Gastrocnemius medialis (tissue), 4 donors: ENCODE measurements at regions of chr6 and their contacts with region 1.

Region 1: DNA sequence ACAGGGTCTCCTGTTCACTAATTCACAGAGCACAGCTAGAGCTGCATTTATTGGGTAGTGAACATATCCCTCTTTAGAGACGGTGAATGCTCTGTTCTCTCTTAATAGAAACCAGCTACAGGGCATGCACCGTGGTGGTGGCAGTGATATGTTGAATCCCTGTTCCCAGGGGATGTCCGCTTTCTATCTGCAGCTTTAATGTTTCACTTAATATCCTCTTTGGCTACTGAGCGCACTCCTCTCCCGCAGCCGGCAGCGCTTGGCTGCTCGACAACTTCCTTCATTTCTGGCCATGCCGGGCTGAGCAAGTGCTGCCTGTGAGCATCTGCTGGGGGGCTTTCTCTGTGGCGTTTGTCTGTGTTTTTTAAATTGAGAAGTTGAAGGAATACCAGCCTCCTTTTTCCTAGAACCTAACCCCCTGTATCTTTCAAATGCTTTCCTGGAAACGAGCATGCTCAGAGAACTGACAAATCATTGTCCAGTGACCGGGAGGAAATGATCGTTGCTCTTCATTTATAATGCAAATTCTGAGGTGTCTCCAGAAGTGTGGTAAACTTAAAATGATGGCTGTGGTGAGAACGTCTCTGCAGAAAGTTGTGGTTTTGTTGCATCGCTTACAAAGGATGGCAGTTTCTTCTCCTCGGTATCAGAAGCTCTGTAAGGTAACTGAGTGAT is 297.9 kb downstream of the UTRN start:
- DNase-seq: peak in 1 of 2 donors; percentile 17
- ATAC-seq: no peak
- H3K4me3 ChIP-seq: peak overlapping the region in 2 of 4 donors; percentile 15 to 24
- H3K27ac ChIP-seq: no peak overlapping the region
- H3K4me1 ChIP-seq: peaks cover 19 to 32% of the 10 kb centered on the region in 2 donors
- H3K27me3 ChIP-seq: no peaks in the 10 kb centered on the region
- CTCF ChIP-seq: no peak
- POLR2A ChIP-seq: no peak

Region 2: GRCh38 chr6:144931172-144932035 is 348.3 kb after region 1 on chr6:
- in situ Hi-C with region 1: loop called in 1 of 4 experiments (anchors 10 kb)
- intact Hi-C with region 1: loop called (anchors 5 kb)
- DNase-seq: no peak
- ATAC-seq: no peak
- H3K4me3 ChIP-seq: no peak overlapping the region
- H3K27ac ChIP-seq: no peak overlapping the region
- H3K4me1 ChIP-seq: peaks cover 0 to 7% of the 10 kb centered on the region in 2 donors
- H3K27me3 ChIP-seq: no peaks in the 10 kb centered on the region
- CTCF ChIP-seq: peak in 2 of 5 experiments; percentile 42 to 47
- POLR2A ChIP-seq: no peak

Region 3: DNA sequence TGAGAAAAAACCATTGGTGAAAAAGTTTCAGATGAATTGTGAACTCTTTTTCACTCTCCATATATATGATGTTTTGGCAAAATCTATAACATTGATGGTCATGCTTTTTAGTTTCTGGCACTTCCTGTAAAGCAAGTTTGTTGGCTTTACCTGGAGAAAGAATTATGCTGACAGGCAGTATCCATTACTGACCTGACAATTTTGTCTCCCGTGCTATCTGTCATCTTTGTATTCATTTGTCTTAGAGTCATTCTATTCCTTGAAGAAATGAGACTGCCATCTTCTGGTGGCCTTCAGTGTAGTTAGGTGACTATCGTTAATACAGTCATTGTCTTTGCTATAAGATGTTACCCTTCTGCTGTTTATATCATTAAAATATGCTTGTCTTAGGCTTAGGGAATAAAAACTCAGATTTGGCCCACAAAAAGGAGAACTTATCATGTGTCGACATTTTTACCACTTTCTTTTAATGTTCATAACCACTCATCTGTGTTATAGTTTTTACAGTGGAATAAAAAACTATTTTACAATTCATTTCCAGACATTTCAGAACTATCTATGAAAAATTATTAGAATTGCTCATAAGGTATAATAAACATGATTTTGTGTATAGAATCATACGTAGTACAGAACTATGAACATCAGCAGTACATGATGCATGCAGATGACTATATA is 445.2 kb after region 1 on chr6:
- in situ Hi-C with region 1: loop called in 1 of 4 experiments (anchors 25 kb)
- intact Hi-C with region 1: loop called (anchors 10 kb)
- DNase-seq: no peak
- ATAC-seq: peak in 1 of 2 donors; percentile 33
- H3K4me3 ChIP-seq: no peak overlapping the region
- H3K27ac ChIP-seq: no peak overlapping the region
- H3K4me1 ChIP-seq: peaks cover 3 to 5% of the 10 kb centered on the region in 2 donors
- H3K27me3 ChIP-seq: no peaks in the 10 kb centered on the region
- CTCF ChIP-seq: peak in 4 of 5 experiments; percentile 22 to 44 (median 31)
- POLR2A ChIP-seq: no peak

Region 4: GRCh38 chr6:145214570-145214969 is 631.5 kb after region 1 on chr6:
- in situ Hi-C with region 1: loop called (anchors 10 to 25 kb)
- intact Hi-C with region 1: loop called (anchors 5 kb)
- DNase-seq: no peak
- ATAC-seq: no peak
- H3K4me3 ChIP-seq: no peak overlapping the region
- H3K27ac ChIP-seq: no peak overlapping the region
- H3K4me1 ChIP-seq: no peaks in the 10 kb centered on the region
- H3K27me3 ChIP-seq: no peaks in the 10 kb centered on the region
- CTCF ChIP-seq: peak; percentile 14 to 57 (median 24)
- POLR2A ChIP-seq: no peak

Region 5: DNA sequence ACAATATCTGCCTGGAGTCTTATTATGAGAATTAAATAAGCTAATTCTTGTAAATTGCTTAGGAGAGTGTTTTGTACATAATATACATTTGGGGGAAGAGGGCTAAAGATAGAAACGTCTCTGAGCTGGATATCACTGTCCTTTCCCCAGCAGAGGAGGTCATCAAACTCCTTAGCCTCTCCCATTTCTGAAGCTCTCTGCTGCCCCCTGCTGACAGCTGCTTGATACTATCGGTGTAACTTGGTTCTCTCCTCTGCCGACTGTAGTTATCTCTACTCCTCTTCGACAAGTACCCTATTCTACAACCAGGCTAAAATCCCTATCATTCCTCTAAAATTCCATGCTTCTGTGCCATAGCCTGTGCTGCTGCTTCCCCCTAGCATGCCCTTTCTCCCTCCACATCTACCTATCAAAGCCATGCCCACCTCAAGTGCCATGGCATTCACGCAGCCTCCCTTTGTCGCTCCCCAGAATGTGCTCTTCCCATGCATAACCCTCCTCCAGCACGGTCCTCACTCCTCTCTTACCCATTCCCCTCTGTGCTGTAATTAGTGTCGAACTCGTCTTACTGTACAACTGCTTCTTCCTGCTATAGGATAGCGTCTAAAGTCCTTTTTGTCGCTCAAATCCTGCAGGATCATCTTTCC is 1051.0 kb after region 1 on chr6:
- in situ Hi-C with region 1: loop called in 1 of 4 experiments (anchors 25 kb)
- intact Hi-C with region 1: loop called (anchors 2 kb)
- DNase-seq: peak; percentile 58 to 67
- ATAC-seq: peak; percentile 85 to 95
- H3K4me3 ChIP-seq: no peak overlapping the region
- H3K27ac ChIP-seq: no peak overlapping the region
- H3K4me1 ChIP-seq: peaks cover 21 to 26% of the 10 kb centered on the region in 2 donors
- H3K27me3 ChIP-seq: no peaks in the 10 kb centered on the region
- CTCF ChIP-seq: peak; percentile 43 to 83 (median 78)
- POLR2A ChIP-seq: no peak